Breast epithelium (tissue), 4 donors: ENCODE measurements at regions of chr4 and their contacts with region 1.

Region 1: GRCh38 chr4:3148926-3149325 is 74.4 kb downstream of the HTT start:
- DNase-seq: no peak
- H3K4me3 ChIP-seq: no peak overlapping the region
- H3K27ac ChIP-seq: no peak overlapping the region
- H3K4me1 ChIP-seq: no peaks in the 10 kb centered on the region
- H3K27me3 ChIP-seq: no peaks in the 10 kb centered on the region
- CTCF ChIP-seq: no peak
- POLR2A ChIP-seq: no peak

Region 2: GRCh38 chr4:3442959-3443749 is 294.2 kb after region 1 on chr4:
- intact Hi-C with region 1: loop called (anchors 1 kb)
- DNase-seq: no peak
- H3K4me3 ChIP-seq: no peak overlapping the region
- H3K27ac ChIP-seq: no peak overlapping the region
- H3K4me1 ChIP-seq: peaks cover 0 to 2% of the 10 kb centered on the region in 2 donors
- H3K27me3 ChIP-seq: no peaks in the 10 kb centered on the region
- CTCF ChIP-seq: peak; percentile 86 to 97 (median 97)
- POLR2A ChIP-seq: no peak